ENCODE measurements at regions of chr7 and their contacts with region 1.

Region 1: GRCh38 chr7:42940985-42941847 is 9.0 kb downstream of the MRPL32 start:
- DNase-seq: no peak

Region 2: GRCh38 chr7:43004082-43004481 is 62.9 kb after region 1 on chr7:
- intact Hi-C with region 1: no loop called
- DNase-seq: no peak

Region 3: DNA sequence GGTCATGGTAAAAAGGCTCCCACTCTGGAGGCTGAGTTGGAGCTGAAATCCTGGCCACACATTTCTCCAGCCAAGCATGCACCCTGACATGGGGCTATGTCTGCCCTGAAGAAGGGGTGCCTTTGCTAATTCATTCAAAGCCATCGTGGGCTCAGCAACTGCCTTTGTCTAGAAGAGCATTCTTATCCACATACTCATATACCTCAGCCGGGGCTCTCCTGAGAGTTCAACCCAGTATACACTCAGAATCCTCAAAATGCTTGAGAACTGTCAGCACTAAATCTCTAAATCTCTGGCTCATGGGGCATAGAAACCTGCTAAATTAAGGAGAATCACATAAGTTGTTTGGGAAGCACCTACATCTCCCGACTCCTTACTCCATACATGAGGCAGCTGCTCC is 80.2 kb after region 1 on chr7:
- intact Hi-C with region 1: no loop called
- DNase-seq: no peak

Region 4: GRCh38 chr7:43112941-43113621 is 171.9 kb after region 1 on chr7:
- intact Hi-C with region 1: loop called (anchors 10 kb)
- DNase-seq: no peak

Region 5: GRCh38 chr7:43260980-43261878 is 320.0 kb after region 1 on chr7:
- intact Hi-C with region 1: loop called (anchors 1 kb)
- DNase-seq: peak; percentile 82

Region 6: DNA sequence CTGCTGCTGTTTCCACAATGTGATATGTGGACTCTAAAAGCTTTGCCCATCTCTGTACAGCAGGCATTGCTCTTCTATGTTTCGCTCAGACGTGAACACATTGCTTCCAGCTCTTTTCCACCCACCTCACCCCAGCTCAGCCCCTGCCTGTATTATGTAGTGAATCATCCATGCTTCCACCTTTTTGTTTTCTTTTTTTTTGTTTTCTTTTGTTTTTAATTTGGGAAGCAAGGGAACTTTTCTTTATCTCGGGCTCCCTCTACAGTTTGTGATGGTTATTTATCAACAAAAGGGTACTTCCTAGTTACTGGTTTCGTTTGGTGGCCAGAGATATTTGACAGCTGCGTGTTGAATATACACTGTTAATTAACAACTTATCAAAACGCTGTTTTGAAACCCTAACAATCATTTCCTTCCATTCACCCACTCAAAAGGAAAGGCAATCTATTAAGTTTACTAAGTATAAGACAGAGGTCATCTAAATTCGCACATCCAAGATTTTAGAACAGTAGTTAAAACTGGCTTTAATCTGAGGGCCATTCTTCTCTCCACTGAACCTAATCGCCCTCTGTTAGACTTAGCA is 513.8 kb after region 1 on chr7:
- intact Hi-C with region 1: loop called (anchors 5 kb)
- DNase-seq: no peak